GM12878 (cell line): ENCODE measurements at regions of chr16 and their contacts with region 1.

Region 1: DNA sequence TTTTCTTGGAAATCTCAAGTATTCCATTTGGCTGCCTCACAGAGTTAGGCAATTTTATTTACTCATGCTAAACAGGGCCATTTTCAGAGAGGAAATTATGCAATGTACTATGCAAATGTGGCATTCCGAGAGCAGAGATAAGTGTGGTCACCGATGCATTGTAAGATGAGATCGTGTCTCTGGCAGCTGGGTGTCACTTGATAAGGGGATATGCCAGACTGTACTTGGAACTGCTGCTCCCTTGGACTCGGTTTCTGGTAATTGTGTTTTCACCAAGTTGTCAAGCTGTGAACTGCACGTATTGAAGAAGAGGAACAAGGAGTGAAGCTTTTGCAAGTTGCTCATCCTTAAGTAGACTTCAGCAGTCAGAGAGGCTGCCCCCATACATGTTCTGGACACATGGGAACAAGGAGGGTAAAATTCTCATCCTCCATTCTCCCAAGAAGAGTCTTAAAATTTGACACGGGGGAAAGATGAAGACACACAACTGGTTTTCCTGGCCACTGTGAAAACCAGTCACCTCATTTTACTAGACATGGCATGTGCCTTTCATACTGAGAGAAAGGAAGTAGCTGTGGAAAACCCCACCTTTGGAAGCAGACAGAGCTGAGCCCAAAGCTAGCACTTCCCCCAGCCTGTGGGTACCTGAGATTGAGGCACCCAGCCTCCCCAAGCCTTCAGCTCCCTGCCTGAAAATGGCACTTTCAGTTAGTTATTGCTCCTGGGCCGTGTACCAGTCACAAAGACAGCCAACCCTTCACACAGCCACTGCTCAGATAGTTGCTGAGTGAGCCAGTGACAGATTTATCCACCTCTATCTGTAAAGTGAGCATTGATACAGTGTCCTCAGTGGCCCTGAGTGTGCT is 150.7 kb downstream of the SOCS1 start:
- DNase-seq: peak; percentile 86
- ATAC-seq: peak; percentile 85
- H3K4me3 ChIP-seq: 0 out of 2 replicates have a peak overlapping the region, but pooled peaks have one; percentile 31
- H3K27ac ChIP-seq: peak overlapping the region; percentile 87
- H3K4me1 ChIP-seq: peaks cover 38% of the 10 kb centered on the region
- H3K27me3 ChIP-seq: no peaks in the 10 kb centered on the region
- CTCF ChIP-seq: no peak
- EP300 ChIP-seq: peak in 1 of 2 experiments; percentile 46; a peak in 1 of 4 replicates
- POLR2A ChIP-seq: peak; percentile 69
- RAD21 ChIP-seq: no peak

Region 2: DNA sequence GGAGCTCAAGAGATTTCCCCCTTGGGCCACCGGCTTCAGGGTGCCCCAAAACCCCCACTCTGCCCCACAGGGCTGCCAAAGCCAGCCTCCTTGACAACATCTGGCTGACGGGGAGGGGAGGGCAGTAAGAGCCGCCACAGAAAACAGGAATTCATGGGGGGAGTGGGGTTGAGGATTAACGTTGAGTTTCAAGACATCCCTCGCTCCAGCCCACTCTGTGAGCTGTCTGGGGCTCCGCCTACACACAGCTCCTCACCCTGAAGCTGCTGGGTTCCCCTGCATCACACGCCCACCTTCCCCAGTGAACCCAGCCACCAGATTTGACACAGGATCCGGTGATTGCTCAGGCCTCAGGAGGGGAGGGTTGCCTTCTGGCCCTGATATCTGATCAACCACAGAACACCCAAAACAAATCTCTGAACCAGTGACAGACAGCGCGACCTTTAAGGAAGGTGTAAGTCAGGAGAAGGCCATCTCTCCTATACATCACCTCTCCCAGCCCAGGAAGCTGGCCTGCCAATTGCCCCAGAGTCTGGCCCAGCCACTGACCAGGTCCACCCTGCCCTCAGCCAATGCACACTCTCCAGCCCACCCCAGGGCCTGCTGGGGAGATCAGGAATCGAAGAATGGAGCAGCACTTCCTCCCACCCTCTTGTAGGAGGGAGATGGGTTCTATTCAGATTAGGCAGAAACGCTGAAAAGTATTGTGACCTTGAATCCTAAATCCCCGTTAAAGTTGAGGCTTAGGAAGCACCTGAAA is 28.8 kb before region 1 on chr16:
- CTCF ChIA-PET with region 1: interaction called, 8 read pairs
- POLR2A ChIA-PET with region 1: interaction called, 10 read pairs
- RAD21 ChIA-PET with region 1: interaction called, 24 read pairs
- SMC1A ChIA-PET with region 1: interaction called, 26 read pairs
- in situ Hi-C with region 1: no loop called
- intact Hi-C with region 1: loop called (anchors 1 kb)
- DNase-seq: peak; percentile 79
- ATAC-seq: peak; percentile 64
- H3K4me3 ChIP-seq: no peak overlapping the region
- H3K27ac ChIP-seq: peak overlapping the region; percentile 65
- H3K4me1 ChIP-seq: peaks cover 46% of the 10 kb centered on the region
- H3K27me3 ChIP-seq: no peaks in the 10 kb centered on the region
- CTCF ChIP-seq: no peak
- EP300 ChIP-seq: 0 out of 4 replicates have a peak, but pooled peaks of 1 of the 2 experiments have one; percentile 10
- POLR2A ChIP-seq: no peak
- RAD21 ChIP-seq: no peak